Activated naive CD4-positive, alpha-beta T cell treated with anti-CD3 and anti-CD28 coated beads, Interleukin-2, amount 10 ng/mL, durations not matched to agents 7 days and 5 days (primary cell): ENCODE measurements at regions of chr17 and their contacts with region 1.

Region 1: DNA sequence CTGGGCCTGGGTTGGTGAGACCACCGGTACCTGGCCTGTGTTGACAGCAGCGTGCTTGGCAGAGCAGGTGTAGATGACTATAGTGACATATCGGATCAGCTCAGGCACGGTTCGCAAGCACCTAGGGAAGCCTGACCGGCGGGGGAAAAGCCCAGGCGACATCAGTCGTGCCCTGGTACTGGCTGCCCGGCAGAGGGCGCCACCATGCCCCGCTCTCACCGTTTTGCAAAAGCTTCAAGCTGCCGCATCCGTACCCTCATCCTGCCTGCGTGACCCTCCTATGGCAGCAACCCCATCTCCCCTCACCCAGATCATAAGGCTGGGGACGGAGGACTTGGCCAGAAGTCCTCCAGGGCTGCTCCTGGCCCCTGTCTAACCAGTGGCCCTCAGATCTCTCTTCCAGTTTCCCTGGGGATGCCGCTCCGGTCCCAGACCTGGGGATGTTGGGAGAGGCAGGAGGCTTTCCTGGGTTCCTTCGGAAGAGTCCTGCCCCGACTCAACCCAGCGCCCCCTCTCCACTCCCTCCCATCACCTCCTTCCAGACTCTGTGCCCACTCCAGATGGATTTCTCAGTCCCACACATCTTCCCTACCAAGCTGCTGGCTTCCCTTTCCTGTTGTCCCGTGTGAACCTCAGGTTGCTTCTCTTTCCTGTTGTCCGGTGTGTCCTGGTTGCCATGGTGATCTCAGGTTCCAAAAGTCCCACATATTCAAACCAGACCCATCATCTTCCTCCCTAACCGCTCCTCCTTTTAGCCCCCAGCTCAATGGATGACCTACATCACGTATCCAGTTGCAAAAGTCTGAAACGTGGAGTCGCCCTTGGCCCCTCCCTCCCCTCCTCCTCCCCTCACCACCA is 13.7 kb downstream of the ALOX12B start:
- DNase-seq: peak; percentile 89
- H3K4me3 Mint-ChIP-seq: peak overlapping the region; percentile 65
- H3K27ac Mint-ChIP-seq: peak overlapping the region; percentile 21
- H3K4me1 Mint-ChIP-seq: peaks cover 30% of the 10 kb centered on the region
- H3K27me3 Mint-ChIP-seq: peaks cover 89% of the 10 kb centered on the region

Region 2: DNA sequence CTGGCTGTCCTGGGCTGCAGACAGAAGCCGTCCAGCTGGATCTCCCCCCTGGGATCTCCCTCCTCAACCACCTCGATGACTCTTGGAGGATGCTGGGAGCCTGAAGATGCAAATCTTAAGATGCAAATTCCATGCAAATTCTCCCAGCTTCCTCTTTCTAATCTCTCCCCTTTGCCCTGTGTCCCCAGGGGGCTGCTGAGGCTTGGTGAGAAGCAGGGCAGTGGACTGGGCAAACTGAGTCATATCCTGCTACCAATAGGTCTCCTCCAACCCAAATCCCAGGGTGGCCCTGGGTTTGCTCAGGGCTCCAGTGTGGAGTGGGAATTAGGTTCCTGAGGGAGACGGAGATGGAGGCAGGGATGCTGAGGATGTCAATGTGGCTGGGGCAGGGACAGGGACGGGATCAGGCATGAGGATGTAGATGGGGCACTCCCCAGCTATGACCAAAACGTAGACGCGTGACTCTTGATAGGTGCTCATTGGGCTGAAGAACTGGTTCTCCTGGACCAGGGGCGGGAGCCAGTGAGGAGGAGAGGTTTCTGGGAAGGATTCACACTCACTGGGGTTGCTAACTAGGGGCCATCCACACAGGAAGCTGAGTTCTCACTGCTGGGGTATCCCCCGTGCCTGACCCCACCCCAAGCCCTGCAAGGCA is 17.3 kb after region 1 on chr17:
- CTCF ChIA-PET with region 1: interaction called, 21 read pairs
- DNase-seq: no peak
- H3K4me3 Mint-ChIP-seq: no peak overlapping the region
- H3K27ac Mint-ChIP-seq: no peak overlapping the region
- H3K4me1 Mint-ChIP-seq: peaks cover 20% of the 10 kb centered on the region
- H3K27me3 Mint-ChIP-seq: peaks cover 92% of the 10 kb centered on the region

Region 3: GRCh38 chr17:8100111-8100510 is 26.3 kb after region 1 on chr17:
- CTCF ChIA-PET with region 1: interaction called, 21 read pairs
- DNase-seq: no peak
- H3K4me3 Mint-ChIP-seq: no peak overlapping the region
- H3K27ac Mint-ChIP-seq: no peak overlapping the region
- H3K4me1 Mint-ChIP-seq: peaks cover 5% of the 10 kb centered on the region
- H3K27me3 Mint-ChIP-seq: peaks cover 48% of the 10 kb centered on the region